Stomach (tissue), 19 donors: ENCODE measurements at regions of chr2 and their contacts with region 1.

Region 1: GRCh38 chr2:106193977-106194778 is at the start of gene UXS1:
- DNase-seq: peak; percentile 99
- H3K4me3 ChIP-seq: peak within 1 kb of the TSS; percentile 86 to 97 (median 93)
- H3K27ac ChIP-seq: peak within 1 kb of the TSS; percentile 83 to 94 (median 90)
- H3K4me1 ChIP-seq: peaks cover 13 to 56% (median 39%) of the 10 kb centered on the region in 4 donors
- H3K27me3 ChIP-seq: no peaks in the 10 kb centered on the region
- CTCF ChIP-seq: no peak
- EP300 ChIP-seq: no peak
- POLR2A ChIP-seq: no peak
- total RNA-seq, gene UXS1: 7.0 to 111 (median 30.5) TPM

Region 2: GRCh38 chr2:106115250-106115649 is 78.9 kb before region 1 on chr2:
- intact Hi-C with region 1: loop called (anchors 10 kb)
- DNase-seq: no peak
- H3K4me3 ChIP-seq: no peak overlapping the region
- H3K27ac ChIP-seq: peak overlapping the region in 3 of 5 donors; percentile 79 to 85 (median 84)
- H3K4me1 ChIP-seq: peaks cover 13 to 32% (median 27%) of the 10 kb centered on the region in 4 donors
- H3K27me3 ChIP-seq: no peaks in the 10 kb centered on the region
- CTCF ChIP-seq: no peak
- EP300 ChIP-seq: no peak
- POLR2A ChIP-seq: no peak